HepG2 (cell line): ENCODE measurements at regions of chr20 and their contacts with region 1.

Region 1: GRCh38 chr20:53547664-53548239 is 45.9 kb downstream of the ZNF217 start:
- DNase-seq: peak; percentile 84
- ATAC-seq: peak; percentile 58
- H3K4me3 ChIP-seq: no peak overlapping the region
- H3K27ac ChIP-seq: no peak overlapping the region
- H3K4me1 ChIP-seq: peaks cover 51% of the 10 kb centered on the region
- H3K27me3 ChIP-seq: no peaks in the 10 kb centered on the region
- CTCF ChIP-seq: peak; percentile 96
- EP300 ChIP-seq: 0 out of 4 replicates have a peak, but pooled peaks of 1 of the 2 experiments have one; percentile 30
- POLR2A ChIP-seq: no peak
- RAD21 ChIP-seq: peak; percentile 98

Region 2: GRCh38 chr20:52312132-52312729 is 1235.5 kb before region 1 on chr20:
- CTCF ChIA-PET with region 1: interaction called, 4 read pairs
- POLR2A ChIA-PET with region 1: no interaction called
- in situ Hi-C with region 1: loop called (anchors 5 kb)
- intact Hi-C with region 1: no loop called
- DNase-seq: peak; percentile 70
- ATAC-seq: peak; percentile 81
- H3K4me3 ChIP-seq: no peak overlapping the region
- H3K27ac ChIP-seq: no peak overlapping the region
- H3K4me1 ChIP-seq: peaks cover 10% of the 10 kb centered on the region; the same call in 1 of the 2 replicates
- H3K27me3 ChIP-seq: peaks cover 5 to 12% of the 10 kb centered on the region in 2 experiments; a peak in 3 of 5 replicates
- CTCF ChIP-seq: peak; percentile 82
- EP300 ChIP-seq: no peak
- POLR2A ChIP-seq: no peak
- RAD21 ChIP-seq: peak; percentile 53; the same call in 1 of the 2 replicates

Region 3: DNA sequence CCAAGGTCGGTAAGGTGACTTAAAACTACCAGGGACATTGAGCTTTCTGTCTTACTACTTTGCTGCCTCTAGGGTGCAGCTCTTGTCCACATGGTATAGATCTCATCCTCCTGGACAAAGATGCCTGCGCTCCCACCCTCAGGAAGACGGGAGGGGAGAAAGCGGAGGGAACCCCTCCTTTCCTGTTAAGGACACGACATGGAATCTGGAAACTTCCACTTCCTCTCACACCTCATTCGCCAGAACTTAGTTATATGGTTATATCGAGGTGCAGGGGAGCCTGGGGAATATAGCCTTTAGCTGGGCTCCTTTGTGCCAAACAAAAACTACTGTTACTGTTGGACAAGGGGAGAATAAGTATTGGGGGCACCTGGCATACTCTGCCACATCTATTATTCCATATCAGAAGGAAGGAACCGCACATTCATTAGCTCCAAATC is 799.9 kb before region 1 on chr20:
- CTCF ChIA-PET with region 1: no interaction called
- POLR2A ChIA-PET with region 1: no interaction called
- in situ Hi-C with region 1: loop called (anchors 25 kb)
- intact Hi-C with region 1: loop called (anchors 10 kb)
- DNase-seq: peak; percentile 37
- ATAC-seq: peak; percentile 97
- H3K4me3 ChIP-seq: no peak overlapping the region
- H3K27ac ChIP-seq: no peak overlapping the region
- H3K4me1 ChIP-seq: no peaks in the 10 kb centered on the region
- H3K27me3 ChIP-seq: no peaks in the 10 kb centered on the region
- CTCF ChIP-seq: peak; percentile 82
- EP300 ChIP-seq: no peak
- POLR2A ChIP-seq: no peak
- RAD21 ChIP-seq: peak; percentile 71

Region 4: DNA sequence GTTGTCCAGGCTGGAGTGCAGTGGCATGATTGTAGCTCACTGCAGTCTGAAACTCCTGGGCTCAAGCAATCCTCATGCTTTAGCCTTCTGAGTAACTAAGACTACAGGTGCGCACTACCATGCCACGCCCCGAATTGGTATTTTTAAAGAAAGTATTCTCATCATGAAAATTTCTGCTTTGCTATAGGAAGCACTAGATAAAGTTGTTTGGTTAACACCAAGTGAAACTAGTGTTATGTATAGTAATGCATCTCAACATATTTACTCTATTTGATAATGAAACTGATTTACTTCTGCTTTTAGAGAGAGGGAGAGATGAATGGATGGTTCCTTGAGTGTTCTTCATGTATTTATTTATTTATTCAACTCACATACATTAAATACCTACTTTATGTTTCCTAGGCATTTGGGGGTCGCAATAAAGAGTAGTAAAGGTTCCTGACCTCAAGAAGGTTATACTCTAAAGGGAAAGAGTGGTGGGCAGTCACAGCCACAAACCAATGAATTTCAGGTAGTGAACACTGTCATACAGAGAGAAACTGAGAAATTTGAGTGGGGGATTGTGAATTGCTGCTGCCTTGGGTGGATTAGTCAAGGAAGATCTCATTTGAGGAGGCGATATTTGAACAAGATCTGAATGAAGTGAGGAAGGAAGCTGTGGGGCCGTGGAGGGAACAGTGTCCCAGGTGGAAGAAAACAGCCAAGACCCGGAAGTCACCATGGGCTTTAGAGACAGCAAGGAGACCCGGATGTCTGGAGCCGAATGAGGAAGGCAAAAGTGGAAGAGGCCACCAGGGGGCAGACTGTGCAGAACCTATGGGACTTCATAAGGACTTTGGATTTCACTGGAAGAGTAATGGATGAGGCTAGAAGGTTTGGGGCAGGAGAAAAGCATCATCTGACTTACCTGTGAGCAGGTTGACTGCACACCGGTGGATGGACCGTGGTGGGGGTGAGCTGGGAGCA is 390.0 kb before region 1 on chr20:
- CTCF ChIA-PET with region 1: interaction called, 3 read pairs
- POLR2A ChIA-PET with region 1: no interaction called
- in situ Hi-C with region 1: no loop called
- intact Hi-C with region 1: loop called (anchors 1 kb)
- DNase-seq: peak; percentile 72
- ATAC-seq: peak; percentile 86
- H3K4me3 ChIP-seq: no peak overlapping the region
- H3K27ac ChIP-seq: no peak overlapping the region
- H3K4me1 ChIP-seq: no peaks in the 10 kb centered on the region
- H3K27me3 ChIP-seq: no peaks in the 10 kb centered on the region
- CTCF ChIP-seq: peak; percentile 70
- EP300 ChIP-seq: no peak
- POLR2A ChIP-seq: no peak
- RAD21 ChIP-seq: no peak

Region 5: GRCh38 chr20:53413186-53413631 is 134.5 kb before region 1 on chr20:
- CTCF ChIA-PET with region 1: interaction called, 82 read pairs
- POLR2A ChIA-PET with region 1: interaction called, 6 read pairs
- in situ Hi-C with region 1: loop called (anchors 5 kb)
- intact Hi-C with region 1: loop called (anchors 1 kb)
- DNase-seq: peak; percentile 83
- ATAC-seq: peak; percentile 96
- H3K4me3 ChIP-seq: peak overlapping the region in 1 of 3 experiments; percentile 20; a peak in 3 of 6 replicates
- H3K27ac ChIP-seq: no peak overlapping the region
- H3K4me1 ChIP-seq: no peaks in the 10 kb centered on the region
- H3K27me3 ChIP-seq: no peaks in the 10 kb centered on the region
- CTCF ChIP-seq: peak; percentile 98
- EP300 ChIP-seq: no peak
- POLR2A ChIP-seq: no peak
- RAD21 ChIP-seq: peak; percentile 98

Region 6: GRCh38 chr20:53530440-53530839 is 17.3 kb before region 1 on chr20:
- CTCF ChIA-PET with region 1: no interaction called
- POLR2A ChIA-PET with region 1: no interaction called
- in situ Hi-C with region 1: no loop called
- intact Hi-C with region 1: no loop called
- DNase-seq: no peak
- ATAC-seq: no peak
- H3K4me3 ChIP-seq: no peak overlapping the region
- H3K27ac ChIP-seq: no peak overlapping the region
- H3K4me1 ChIP-seq: no peaks in the 10 kb centered on the region
- H3K27me3 ChIP-seq: peaks cover 0 to 2% of the 10 kb centered on the region in 2 experiments; a peak in 2 of 5 replicates
- CTCF ChIP-seq: no peak
- EP300 ChIP-seq: no peak
- POLR2A ChIP-seq: no peak
- RAD21 ChIP-seq: no peak

Region 7: DNA sequence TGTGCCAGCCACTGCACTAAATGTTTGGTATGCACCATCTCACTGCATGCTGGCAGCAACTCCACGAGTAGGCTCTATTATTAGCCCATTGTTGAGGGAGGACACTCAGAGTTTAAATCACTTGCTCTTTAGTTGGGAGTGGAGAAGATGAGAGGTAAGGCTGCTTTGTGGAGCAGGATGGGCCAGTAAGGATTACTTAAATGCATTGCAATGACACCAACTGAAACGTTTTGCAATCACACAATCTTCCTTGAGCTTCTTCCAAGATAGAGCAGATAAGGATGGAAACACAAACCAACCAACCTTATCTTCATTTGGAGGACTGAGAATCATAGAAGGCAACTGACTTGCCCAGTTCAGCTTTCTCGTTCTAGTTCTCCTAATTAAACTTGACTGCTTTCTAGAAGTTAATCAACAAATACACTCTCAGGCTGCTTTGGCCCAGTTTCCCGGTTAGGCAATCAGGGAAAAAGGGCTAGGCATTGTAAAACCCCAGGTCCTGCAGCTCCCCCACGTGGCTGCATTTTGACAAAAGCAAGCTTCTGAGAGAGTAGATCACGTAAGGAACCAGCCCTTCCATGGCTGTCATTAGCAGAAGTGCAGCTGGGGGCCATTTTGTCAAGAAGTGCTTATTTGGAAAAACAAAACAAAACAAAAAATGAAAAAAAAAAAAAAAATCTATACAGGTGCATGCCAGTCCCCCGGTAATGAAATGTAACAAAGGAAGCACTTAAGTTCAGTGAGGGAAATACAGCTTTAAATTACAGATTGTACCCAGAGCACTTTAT is 392.0 kb after region 1 on chr20:
- CTCF ChIA-PET with region 1: interaction called, 8 read pairs
- POLR2A ChIA-PET with region 1: interaction called, 5 read pairs
- in situ Hi-C with region 1: no loop called
- intact Hi-C with region 1: loop called (anchors 1 kb)
- DNase-seq: peak; percentile 95
- ATAC-seq: peak; percentile 91
- H3K4me3 ChIP-seq: no peak overlapping the region; a peak in 1 of 6 replicates
- H3K27ac ChIP-seq: no peak overlapping the region
- H3K4me1 ChIP-seq: peaks cover 83% of the 10 kb centered on the region
- H3K27me3 ChIP-seq: no peaks in the 10 kb centered on the region; a peak in 1 of 5 replicates
- CTCF ChIP-seq: peak; percentile 94
- EP300 ChIP-seq: no peak
- POLR2A ChIP-seq: no peak
- RAD21 ChIP-seq: peak; percentile 95